HepG2 (cell line): ENCODE measurements at regions of chr6 and their contacts with region 1.

Region 1: GRCh38 chr6:54204921-54205591 is 93.8 kb downstream of the MLIP start:
- DNase-seq: peak; percentile 79
- ATAC-seq: peak; percentile 86
- H3K4me3 ChIP-seq: no peak overlapping the region
- H3K27ac ChIP-seq: peak overlapping the region; percentile 25
- H3K4me1 ChIP-seq: peaks cover 36% of the 10 kb centered on the region
- H3K27me3 ChIP-seq: no peaks in the 10 kb centered on the region
- CTCF ChIP-seq: no peak
- EP300 ChIP-seq: peak in 1 of 2 experiments; percentile 67; a peak in 1 of 4 replicates
- POLR2A ChIP-seq: no peak
- RAD21 ChIP-seq: no peak

Region 2: DNA sequence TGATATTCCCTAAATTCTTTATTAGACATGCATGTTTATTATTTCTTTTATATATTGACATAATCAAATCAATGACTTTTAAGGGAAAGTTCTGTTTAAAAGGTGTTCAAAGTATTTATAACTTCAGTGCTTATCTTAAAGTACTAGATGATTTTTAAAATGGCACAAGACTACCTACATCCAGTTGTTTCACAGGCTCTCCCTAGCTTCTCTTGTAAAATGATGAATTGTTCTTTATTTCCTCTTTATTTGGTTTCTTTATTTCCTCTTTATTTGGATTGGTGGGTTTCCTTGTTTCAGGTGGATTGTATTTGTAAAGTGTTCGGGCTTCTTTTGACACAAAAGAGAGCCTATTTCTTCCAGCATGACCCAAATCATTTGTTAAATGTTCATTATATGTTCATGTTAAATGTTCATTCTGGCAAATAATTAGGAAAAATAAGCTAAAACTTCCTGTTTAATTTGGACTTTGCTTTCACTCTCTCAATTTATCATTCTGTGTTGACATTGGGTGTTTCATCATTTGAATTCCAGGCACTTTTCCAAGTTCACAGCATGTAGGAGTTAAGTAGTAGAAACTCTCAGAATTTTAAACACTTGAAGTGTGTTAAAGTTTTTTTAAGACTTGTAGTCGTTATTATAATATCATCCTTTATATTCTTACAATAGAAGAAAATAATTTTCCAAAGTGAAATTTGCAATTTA is 69.2 kb before region 1 on chr6:
- CTCF ChIA-PET with region 1: no interaction called
- POLR2A ChIA-PET with region 1: no interaction called
- in situ Hi-C with region 1: no loop called
- intact Hi-C with region 1: loop called (anchors 5 kb)
- DNase-seq: peak; percentile 74
- ATAC-seq: peak; percentile 71
- H3K4me3 ChIP-seq: peak overlapping the region in 2 of 3 experiments; percentile 14 to 19; a peak in 1 of 6 replicates
- H3K27ac ChIP-seq: peak overlapping the region; percentile 3
- H3K4me1 ChIP-seq: peaks cover 24% of the 10 kb centered on the region
- H3K27me3 ChIP-seq: no peaks in the 10 kb centered on the region
- CTCF ChIP-seq: no peak
- EP300 ChIP-seq: peak in 1 of 2 experiments; percentile 78; a peak in 2 of 4 replicates
- POLR2A ChIP-seq: no peak
- RAD21 ChIP-seq: no peak

Region 3: DNA sequence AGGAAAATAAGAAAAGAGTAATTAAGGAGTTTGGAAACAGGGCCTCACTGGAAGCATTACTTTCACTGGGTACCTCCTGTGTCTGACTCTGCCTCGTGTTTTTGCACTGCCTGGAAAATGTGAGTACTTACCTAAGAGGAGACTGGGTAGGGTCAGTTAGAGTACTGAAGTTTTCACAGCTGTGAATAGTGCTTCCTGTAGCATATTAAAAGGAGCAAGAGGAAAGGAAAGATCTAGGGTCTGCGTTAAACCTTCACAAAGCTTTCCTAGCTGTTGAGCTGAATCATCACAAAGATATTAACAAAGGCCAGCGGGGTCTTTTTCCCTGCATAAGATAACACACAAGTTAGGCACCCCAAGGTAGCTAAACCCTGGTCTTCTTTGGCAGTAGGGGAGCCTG is 11.5 kb before region 1 on chr6:
- CTCF ChIA-PET with region 1: no interaction called
- POLR2A ChIA-PET with region 1: no interaction called
- in situ Hi-C with region 1: no loop called
- intact Hi-C with region 1: loop called (anchors 1 kb)
- DNase-seq: no peak
- ATAC-seq: no peak
- H3K4me3 ChIP-seq: no peak overlapping the region
- H3K27ac ChIP-seq: no peak overlapping the region
- H3K4me1 ChIP-seq: no peaks in the 10 kb centered on the region
- H3K27me3 ChIP-seq: no peaks in the 10 kb centered on the region
- CTCF ChIP-seq: no peak
- EP300 ChIP-seq: no peak
- POLR2A ChIP-seq: no peak
- RAD21 ChIP-seq: no peak

Region 4: DNA sequence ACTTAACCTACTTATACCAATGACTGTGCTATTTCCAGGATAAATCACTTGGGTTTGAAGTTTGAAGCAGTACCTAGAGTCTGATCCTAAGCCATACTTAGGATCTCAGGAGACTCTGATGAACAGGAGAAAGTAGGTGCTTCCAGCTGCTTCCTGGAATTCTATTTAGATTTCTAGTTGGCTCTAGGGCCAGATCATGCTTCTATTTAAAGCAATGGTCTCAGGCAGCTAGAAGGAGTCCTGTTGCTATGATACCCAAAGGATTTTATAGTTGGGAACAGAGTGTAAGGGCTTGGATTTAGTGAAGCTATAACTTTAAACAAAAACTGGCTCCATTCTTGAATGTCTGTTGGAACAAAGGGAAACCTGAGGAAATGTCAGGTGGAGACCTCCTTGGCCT is 50.8 kb after region 1 on chr6:
- CTCF ChIA-PET with region 1: no interaction called
- POLR2A ChIA-PET with region 1: no interaction called
- in situ Hi-C with region 1: no loop called
- intact Hi-C with region 1: loop called (anchors 5 kb)
- DNase-seq: no peak
- ATAC-seq: no peak
- H3K4me3 ChIP-seq: no peak overlapping the region
- H3K27ac ChIP-seq: no peak overlapping the region
- H3K4me1 ChIP-seq: no peaks in the 10 kb centered on the region
- H3K27me3 ChIP-seq: no peaks in the 10 kb centered on the region
- CTCF ChIP-seq: no peak
- EP300 ChIP-seq: no peak
- POLR2A ChIP-seq: no peak
- RAD21 ChIP-seq: no peak

Region 5: GRCh38 chr6:54366667-54367327 is 161.7 kb after region 1 on chr6:
- CTCF ChIA-PET with region 1: no interaction called
- POLR2A ChIA-PET with region 1: no interaction called
- in situ Hi-C with region 1: no loop called
- intact Hi-C with region 1: no loop called
- DNase-seq: no peak
- ATAC-seq: no peak
- H3K4me3 ChIP-seq: no peak overlapping the region
- H3K27ac ChIP-seq: no peak overlapping the region
- H3K4me1 ChIP-seq: no peaks in the 10 kb centered on the region
- H3K27me3 ChIP-seq: no peaks in the 10 kb centered on the region
- CTCF ChIP-seq: no peak
- EP300 ChIP-seq: no peak
- POLR2A ChIP-seq: no peak
- RAD21 ChIP-seq: no peak

Region 6: GRCh38 chr6:54431466-54431865 is 226.4 kb after region 1 on chr6:
- CTCF ChIA-PET with region 1: no interaction called
- POLR2A ChIA-PET with region 1: no interaction called
- in situ Hi-C with region 1: no loop called
- intact Hi-C with region 1: no loop called
- DNase-seq: no peak
- ATAC-seq: no peak
- H3K4me3 ChIP-seq: no peak overlapping the region
- H3K27ac ChIP-seq: no peak overlapping the region
- H3K4me1 ChIP-seq: no peaks in the 10 kb centered on the region
- H3K27me3 ChIP-seq: no peaks in the 10 kb centered on the region; a peak in 1 of 5 replicates
- CTCF ChIP-seq: no peak
- EP300 ChIP-seq: no peak
- POLR2A ChIP-seq: no peak
- RAD21 ChIP-seq: no peak